Activated CD8-positive, alpha-beta T cell treated with anti-CD3 and anti-CD28 coated beads for 36 hours (primary cell): ENCODE measurements at regions of chr21 and their contacts with region 1.

Region 1: GRCh38 chr21:44892536-44893277 is 19.2 kb upstream of the PTTG1IP start:
- DNase-seq: peak; percentile 87
- ATAC-seq: peak; percentile 75
- H3K4me3 Mint-ChIP-seq: no peak overlapping the region
- H3K27ac Mint-ChIP-seq: peak overlapping the region; percentile 42
- H3K4me1 Mint-ChIP-seq: peaks cover 14% of the 10 kb centered on the region
- H3K27me3 Mint-ChIP-seq: no peaks in the 10 kb centered on the region
- CTCF ChIP-seq: peak; percentile 90

Region 2: DNA sequence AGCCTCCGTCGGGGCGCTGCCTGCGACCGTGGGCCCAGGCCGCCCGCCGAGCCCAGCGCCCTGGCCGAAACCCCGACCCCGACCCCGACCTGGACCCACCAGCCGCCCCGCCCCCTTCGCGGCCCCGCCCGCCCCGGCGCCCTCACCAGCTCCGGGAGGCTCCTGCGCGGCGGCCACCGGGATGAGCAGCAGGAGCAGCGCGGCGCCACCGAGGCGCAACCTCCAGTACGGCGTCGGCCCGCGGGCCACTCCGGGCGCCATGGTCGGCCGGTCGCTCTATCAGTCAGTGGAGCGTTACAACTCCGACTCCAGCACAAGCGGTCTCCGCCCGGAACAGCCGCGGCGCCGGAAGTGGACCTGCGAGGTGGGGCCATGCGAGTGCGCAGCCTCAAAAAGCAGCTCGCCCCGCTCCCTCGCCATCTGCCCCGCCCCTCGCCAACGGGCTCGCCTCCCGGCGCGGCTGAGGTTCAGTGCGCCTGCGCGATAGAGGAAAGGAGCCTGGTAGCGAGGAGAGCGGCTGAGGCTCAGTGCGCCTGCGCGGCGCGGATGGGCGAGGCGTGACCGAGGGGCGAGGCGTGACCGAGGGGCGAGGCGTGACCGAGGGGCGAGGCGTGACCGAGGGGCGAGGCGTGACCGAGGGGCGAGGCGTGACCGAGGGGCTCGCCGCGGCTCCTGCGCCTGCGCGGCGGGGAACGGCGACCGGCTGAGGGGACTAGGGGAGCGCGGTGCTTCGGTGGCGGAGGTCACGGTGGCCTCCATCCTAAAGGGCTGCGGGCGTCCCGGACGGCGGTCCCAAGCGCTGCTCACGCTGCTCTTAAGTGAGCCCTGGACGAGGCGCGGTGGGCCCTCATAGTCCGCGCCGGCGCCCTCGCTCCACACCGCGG is 19.1 kb before region 1 on chr21 and contains the start of gene PTTG1IP:
- CTCF ChIA-PET with region 1: interaction called, 4 read pairs
- POLR2A ChIA-PET with region 1: interaction called, 166 read pairs
- intact Hi-C with region 1: no loop called
- DNase-seq: peak; percentile 99
- ATAC-seq: peak; percentile 89
- H3K4me3 Mint-ChIP-seq: peak within 1 kb of the TSS; percentile 84
- H3K27ac Mint-ChIP-seq: peak within 1 kb of the TSS; percentile 83
- H3K4me1 Mint-ChIP-seq: peaks cover 40% of the 10 kb centered on the region
- H3K27me3 Mint-ChIP-seq: no peaks in the 10 kb centered on the region
- CTCF ChIP-seq: no peak
- total RNA-seq, gene PTTG1IP: 60.7 to 61.8 TPM

Region 3: DNA sequence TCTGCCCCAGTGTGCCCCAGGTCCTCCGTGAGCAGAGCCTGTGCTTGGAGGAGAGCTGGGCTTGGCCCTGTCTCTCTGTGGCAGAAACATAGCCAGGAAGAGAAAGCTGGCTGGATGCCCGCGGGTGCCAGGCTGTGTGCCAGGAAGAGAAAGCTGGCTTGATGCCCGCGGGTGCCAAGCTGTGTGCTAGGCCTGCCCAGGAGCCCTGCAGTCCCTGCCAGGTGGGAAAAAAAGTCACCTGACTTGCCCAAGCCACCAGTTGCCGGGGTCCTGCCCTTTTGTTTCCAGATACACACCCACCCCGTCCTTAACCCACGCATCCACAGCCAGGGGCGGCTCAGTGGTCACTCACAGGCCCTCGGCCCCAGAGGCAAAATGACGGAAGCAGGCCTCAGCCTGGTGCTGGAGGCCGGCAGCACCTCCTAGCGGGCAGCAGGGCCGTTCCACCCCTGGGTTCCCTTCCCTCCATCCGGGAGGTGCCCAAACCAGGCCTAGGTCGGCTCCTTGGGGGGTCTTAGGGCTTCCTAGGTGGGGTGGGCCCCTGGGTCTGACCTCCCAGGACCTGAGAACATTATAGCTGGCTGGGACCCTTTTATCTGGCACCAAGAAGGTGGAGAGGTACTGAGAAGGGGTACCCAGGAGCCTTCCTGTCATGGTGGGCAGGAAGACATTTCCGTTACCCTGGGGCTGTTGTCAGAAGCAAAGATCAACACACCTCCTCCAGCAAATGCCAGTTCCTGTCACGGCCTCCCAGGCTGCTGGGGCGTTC is 18.9 kb after region 1 on chr21:
- CTCF ChIA-PET with region 1: interaction called, 13 read pairs
- POLR2A ChIA-PET with region 1: interaction called, 18 read pairs
- intact Hi-C with region 1: no loop called
- DNase-seq: peak; percentile 73
- ATAC-seq: peak; percentile 68
- H3K4me3 Mint-ChIP-seq: peak overlapping the region; percentile 58
- H3K27ac Mint-ChIP-seq: peak overlapping the region; percentile 78
- H3K4me1 Mint-ChIP-seq: peaks cover 78% of the 10 kb centered on the region
- H3K27me3 Mint-ChIP-seq: no peaks in the 10 kb centered on the region
- CTCF ChIP-seq: peak; percentile 82

Region 4: GRCh38 chr21:44920694-44921604 is 28.2 kb after region 1 on chr21 and contains the start of gene ITGB2:
- CTCF ChIA-PET with region 1: interaction called, 10 read pairs
- POLR2A ChIA-PET with region 1: interaction called, 10 read pairs
- intact Hi-C with region 1: loop called (anchors 5 kb)
- DNase-seq: peak; percentile 90
- ATAC-seq: peak; percentile 81
- H3K4me3 Mint-ChIP-seq: peak within 1 kb of the TSS; percentile 100
- H3K27ac Mint-ChIP-seq: peak within 1 kb of the TSS; percentile 99
- H3K4me1 Mint-ChIP-seq: peaks cover 61% of the 10 kb centered on the region
- H3K27me3 Mint-ChIP-seq: no peaks in the 10 kb centered on the region
- CTCF ChIP-seq: no peak
- total RNA-seq, gene ITGB2: 340 to 343 TPM

Region 5: GRCh38 chr21:44927587-44928461 is 35.1 kb after region 1 on chr21:
- CTCF ChIA-PET with region 1: interaction called, 83 read pairs
- POLR2A ChIA-PET with region 1: interaction called, 12 read pairs
- intact Hi-C with region 1: loop called (anchors 5 kb)
- DNase-seq: peak; percentile 98
- ATAC-seq: peak; percentile 75
- H3K4me3 Mint-ChIP-seq: peak overlapping the region; percentile 78
- H3K27ac Mint-ChIP-seq: peak overlapping the region; percentile 96
- H3K4me1 Mint-ChIP-seq: peaks cover 77% of the 10 kb centered on the region
- H3K27me3 Mint-ChIP-seq: no peaks in the 10 kb centered on the region
- CTCF ChIP-seq: no peak

Region 6: DNA sequence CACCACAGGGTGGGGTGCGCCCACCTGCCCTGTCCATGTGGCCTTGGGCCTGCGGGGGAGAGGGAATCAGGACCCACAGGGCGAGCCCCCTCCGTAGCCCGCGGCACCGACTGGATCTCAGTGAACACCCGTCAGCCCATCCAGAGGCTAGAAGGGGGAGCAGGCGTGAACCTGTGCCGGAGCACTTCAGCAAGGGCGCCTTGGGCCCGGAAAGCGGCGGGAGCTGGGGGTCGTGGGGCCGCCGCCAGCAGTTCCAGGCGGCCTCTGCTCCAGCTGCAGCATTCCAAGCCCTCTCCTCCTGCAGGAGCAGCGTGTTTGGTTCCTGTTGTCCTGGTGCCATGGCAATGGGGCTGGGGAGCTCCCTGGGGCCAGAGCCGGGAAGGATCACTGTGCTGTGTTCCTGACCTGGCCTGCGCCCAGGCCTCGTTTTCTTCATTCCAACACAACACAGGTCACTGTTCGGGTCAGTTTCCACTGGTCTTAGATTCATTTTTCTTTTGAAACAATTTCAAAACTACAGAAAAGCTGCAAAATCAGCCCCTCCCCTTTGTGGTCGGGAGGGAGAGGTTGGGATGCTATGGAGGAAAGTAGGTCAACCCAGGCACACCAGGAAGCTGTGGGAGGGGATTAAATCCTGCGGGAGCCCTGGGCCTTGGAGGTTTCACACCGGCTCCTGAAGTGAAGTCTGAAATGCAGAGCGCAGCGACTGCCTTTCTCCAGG is 65.9 kb after region 1 on chr21:
- CTCF ChIA-PET with region 1: no interaction called
- POLR2A ChIA-PET with region 1: no interaction called
- intact Hi-C with region 1: no loop called
- DNase-seq: no peak
- ATAC-seq: no peak
- H3K4me3 Mint-ChIP-seq: no peak overlapping the region
- H3K27ac Mint-ChIP-seq: no peak overlapping the region
- H3K4me1 Mint-ChIP-seq: peaks cover 2% of the 10 kb centered on the region
- H3K27me3 Mint-ChIP-seq: no peaks in the 10 kb centered on the region
- CTCF ChIP-seq: no peak